ENCODE measurements at regions of chr14 and their contacts with region 1.

Region 1: GRCh38 chr14:50860478-50861086 is 11.3 kb upstream of the ABHD12B start:
- DNase-seq: peak; percentile 79 to 91 (median 84)
- H3K4me3 ChIP-seq: peak overlapping the region; percentile 85
- H3K4me3 Mint-ChIP-seq: peak overlapping the region; percentile 90 to 99 (median 94)
- H3K27ac ChIP-seq: peak overlapping the region; percentile 43
- H3K27ac Mint-ChIP-seq: peak overlapping the region in 7 of 8 donors; percentile 88 to 96 (median 91)
- H3K4me1 ChIP-seq: peaks cover 7% of the 10 kb centered on the region
- H3K4me1 Mint-ChIP-seq: peaks cover 10 to 13% (median 10%) of the 10 kb centered on the region in 3 donors
- H3K27me3 ChIP-seq: no peaks in the 10 kb centered on the region
- H3K27me3 Mint-ChIP-seq: peaks cover 0 to 3% of the 10 kb centered on the region in 2 donors

Region 2: DNA sequence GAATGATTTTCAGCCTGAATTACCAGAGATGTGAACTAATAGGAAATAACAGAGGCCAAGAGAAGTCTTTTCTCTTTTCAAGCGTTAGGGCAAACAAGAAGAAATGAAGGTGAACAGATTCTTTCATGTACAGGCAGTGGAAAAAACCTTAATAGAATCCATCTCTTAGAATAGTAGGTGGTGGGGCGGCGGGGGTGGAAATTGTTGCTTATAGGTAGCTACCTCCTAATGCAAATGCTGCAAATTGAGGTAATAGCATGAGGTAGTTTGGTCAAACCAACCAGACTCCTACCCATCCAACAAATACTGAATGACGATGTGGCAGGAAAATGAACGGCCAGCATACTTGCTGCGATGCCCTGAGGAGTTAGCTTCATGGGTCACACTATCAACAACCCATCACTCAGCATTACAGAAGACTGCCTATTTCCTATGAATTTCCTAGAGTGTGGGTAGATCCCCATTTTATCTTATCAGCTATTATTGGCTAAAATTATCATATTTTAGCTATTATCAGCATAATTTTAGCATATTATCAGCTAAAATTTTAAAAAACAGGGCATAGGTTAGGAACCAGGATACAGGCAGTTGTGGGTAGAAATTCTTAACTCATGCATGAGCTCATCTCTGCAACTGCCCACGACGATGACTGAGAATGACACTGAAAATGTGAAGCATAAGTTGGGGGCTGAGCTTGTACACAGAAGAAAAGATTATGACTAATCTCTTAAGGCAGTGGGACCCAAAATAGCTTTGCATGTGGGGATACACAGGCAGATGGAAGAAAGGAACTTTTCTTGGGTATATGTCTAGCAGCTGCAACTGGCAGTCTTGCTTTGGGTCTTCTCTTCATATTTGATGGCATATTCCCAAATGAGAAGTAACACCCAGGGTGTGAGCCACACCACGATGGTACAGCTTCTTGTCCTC is 98.3 kb before region 1 on chr14:
- CTCF ChIA-PET with region 1: interaction called, 17 read pairs
- POLR2A ChIA-PET with region 1: interaction called, 4 read pairs
- DNase-seq: no peak
- H3K4me3 ChIP-seq: no peak overlapping the region
- H3K4me3 Mint-ChIP-seq: no peak overlapping the region
- H3K27ac ChIP-seq: no peak overlapping the region
- H3K27ac Mint-ChIP-seq: peak overlapping the region in 5 of 8 donors; percentile 7 to 78 (median 24)
- H3K4me1 ChIP-seq: no peaks in the 10 kb centered on the region
- H3K4me1 Mint-ChIP-seq: no peaks in the 10 kb centered on the region
- H3K27me3 ChIP-seq: no peaks in the 10 kb centered on the region
- H3K27me3 Mint-ChIP-seq: no peaks in the 10 kb centered on the region

Region 3: DNA sequence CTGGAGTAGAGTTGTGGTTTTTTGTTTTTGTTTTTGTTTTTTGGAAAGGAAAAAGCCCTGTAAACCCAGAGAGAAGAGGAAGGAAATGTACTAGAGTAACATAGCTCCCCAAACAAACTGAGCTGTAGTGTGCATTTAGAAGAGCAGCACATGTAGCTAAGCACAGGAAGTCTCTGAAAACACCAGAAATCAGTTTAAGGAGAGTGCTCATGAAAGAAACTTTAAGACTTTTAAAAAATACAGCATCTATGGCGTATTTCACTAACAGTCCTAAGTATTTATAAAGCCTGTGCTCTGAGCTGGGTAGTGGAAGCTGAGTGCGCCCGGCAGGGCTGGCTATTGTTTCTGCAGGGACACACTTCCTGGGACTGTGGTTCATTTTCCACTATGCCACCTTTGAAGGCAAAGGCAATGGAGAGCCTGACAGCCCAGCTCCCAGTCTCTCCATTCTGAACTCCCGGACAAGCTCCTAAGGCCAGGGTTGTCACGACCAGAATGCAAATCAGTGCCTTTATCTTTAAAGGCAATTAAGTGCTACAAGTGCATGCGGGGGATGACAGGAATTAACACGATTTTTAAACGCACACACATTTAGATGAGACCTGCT is 75.0 kb before region 1 on chr14:
- CTCF ChIA-PET with region 1: interaction called, 122 read pairs
- POLR2A ChIA-PET with region 1: interaction called, 5 read pairs
- DNase-seq: peak in 1 of 5 donors; percentile 35
- H3K4me3 ChIP-seq: peak overlapping the region; percentile 10
- H3K4me3 Mint-ChIP-seq: peak overlapping the region; percentile 59 to 79 (median 75)
- H3K27ac ChIP-seq: no peak overlapping the region
- H3K27ac Mint-ChIP-seq: peak overlapping the region; percentile 84 to 98 (median 92)
- H3K4me1 ChIP-seq: peaks cover 66% of the 10 kb centered on the region
- H3K4me1 Mint-ChIP-seq: peaks cover 88 to 100% (median 93%) of the 10 kb centered on the region in 3 donors
- H3K27me3 ChIP-seq: no peaks in the 10 kb centered on the region
- H3K27me3 Mint-ChIP-seq: no peaks in the 10 kb centered on the region

Region 4: GRCh38 chr14:50823051-50823761 is 37.4 kb before region 1 on chr14:
- CTCF ChIA-PET with region 1: interaction called, 49 read pairs
- POLR2A ChIA-PET with region 1: interaction called, 8 read pairs
- DNase-seq: peak in 1 of 5 donors; percentile 29
- H3K4me3 ChIP-seq: peak overlapping the region; percentile 26
- H3K4me3 Mint-ChIP-seq: peak overlapping the region; percentile 44 to 87 (median 78)
- H3K27ac ChIP-seq: peak overlapping the region; percentile 43
- H3K27ac Mint-ChIP-seq: peak overlapping the region; percentile 87 to 98 (median 95)
- H3K4me1 ChIP-seq: peaks cover 96% of the 10 kb centered on the region
- H3K4me1 Mint-ChIP-seq: peaks cover 86 to 96% (median 96%) of the 10 kb centered on the region in 3 donors
- H3K27me3 ChIP-seq: no peaks in the 10 kb centered on the region
- H3K27me3 Mint-ChIP-seq: no peaks in the 10 kb centered on the region

Region 5: GRCh38 chr14:50846226-50846880 is 14.2 kb before region 1 on chr14:
- CTCF ChIA-PET with region 1: interaction called, 11 read pairs
- POLR2A ChIA-PET with region 1: interaction called, 3 read pairs
- DNase-seq: no peak
- H3K4me3 ChIP-seq: no peak overlapping the region
- H3K4me3 Mint-ChIP-seq: no peak overlapping the region
- H3K27ac ChIP-seq: no peak overlapping the region
- H3K27ac Mint-ChIP-seq: no peak overlapping the region
- H3K4me1 ChIP-seq: no peaks in the 10 kb centered on the region
- H3K4me1 Mint-ChIP-seq: no peaks in the 10 kb centered on the region
- H3K27me3 ChIP-seq: no peaks in the 10 kb centered on the region
- H3K27me3 Mint-ChIP-seq: peaks cover 0 to 4% of the 10 kb centered on the region in 2 donors